ENCODE measurements at regions of chr14 and their contacts with region 1.

Region 1: GRCh38 chr14:20855652-20856291 is 35.4 kb upstream of the RNASE3 start:
- DNase-seq: peak; percentile 29 to 66
- H3K4me3 ChIP-seq: no peak overlapping the region
- H3K27ac ChIP-seq: no peak overlapping the region
- H3K4me1 ChIP-seq: peaks cover 0 to 4% (median 2%) of the 10 kb centered on the region in 4 experiments; a peak in 2 of 7 replicates
- H3K27me3 ChIP-seq: no peaks in the 10 kb centered on the region; a peak in 1 of 7 replicates
- CTCF ChIP-seq: peak; percentile 16 to 71 (median 70)
- EP300 ChIP-seq: no peak
- POLR2A ChIP-seq: no peak
- RAD21 ChIP-seq: peak; percentile 85 to 91

Region 2: GRCh38 chr14:20662968-20663732 is 192.6 kb before region 1 on chr14:
- CTCF ChIA-PET with region 1: interaction called, 11 read pairs
- POLR2A ChIA-PET with region 1: no interaction called
- DNase-seq: peak; percentile 96
- H3K4me3 ChIP-seq: peak overlapping the region; percentile 70 to 89 (median 84)
- H3K27ac ChIP-seq: no peak overlapping the region
- H3K4me1 ChIP-seq: peaks cover 0 to 1% (median under 1%) of the 10 kb centered on the region in 4 experiments; a peak in 4 of 7 replicates
- H3K27me3 ChIP-seq: peaks cover 0 to 3% (median 0%) of the 10 kb centered on the region in 4 experiments; a peak in 1 of 7 replicates
- CTCF ChIP-seq: peak; percentile 57 to 86 (median 83)
- EP300 ChIP-seq: no peak
- POLR2A ChIP-seq: no peak
- RAD21 ChIP-seq: peak; percentile 69 to 72

Region 3: DNA sequence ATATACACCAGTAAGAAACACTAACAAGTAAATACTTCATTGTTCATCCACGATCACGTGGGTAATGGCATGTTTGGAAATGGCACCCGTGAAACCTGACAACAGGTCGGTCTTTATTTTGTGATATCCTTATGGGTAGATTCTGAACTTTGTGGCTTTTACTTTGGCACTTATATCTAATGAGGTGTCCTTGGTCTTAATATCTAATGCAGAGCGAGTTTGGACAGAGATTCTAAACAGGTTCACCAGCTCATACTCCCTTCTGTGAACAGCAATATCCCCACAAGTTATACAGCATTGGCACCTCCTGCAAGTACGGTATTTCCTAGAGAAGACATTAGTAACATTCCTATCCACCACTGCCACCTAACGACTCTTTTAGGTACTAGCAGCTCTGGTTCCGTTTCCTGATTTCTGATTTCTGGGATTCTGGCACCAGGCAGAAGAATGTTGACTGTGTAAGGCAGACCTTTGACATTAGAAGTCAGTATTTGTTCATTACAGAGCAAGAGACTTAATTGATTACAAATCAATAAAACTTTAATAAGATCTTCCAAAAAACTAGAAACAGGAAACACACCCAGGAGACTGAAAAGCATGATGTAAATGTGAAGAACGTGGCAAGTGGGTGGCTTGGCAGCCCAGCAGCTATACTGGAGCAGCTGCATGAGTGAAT is 164.8 kb before region 1 on chr14:
- CTCF ChIA-PET with region 1: interaction called, 52 read pairs
- POLR2A ChIA-PET with region 1: no interaction called
- DNase-seq: peak in 1 of 2 experiments; percentile 61
- H3K4me3 ChIP-seq: no peak overlapping the region
- H3K27ac ChIP-seq: no peak overlapping the region
- H3K4me1 ChIP-seq: no peaks in the 10 kb centered on the region
- H3K27me3 ChIP-seq: no peaks in the 10 kb centered on the region
- CTCF ChIP-seq: peak in 2 of 3 experiments; percentile 78 to 86; a peak in 3 of 4 replicates
- EP300 ChIP-seq: no peak
- POLR2A ChIP-seq: no peak
- RAD21 ChIP-seq: peak; percentile 89 to 92

Region 4: GRCh38 chr14:20707622-20708021 is 148.2 kb before region 1 on chr14:
- CTCF ChIA-PET with region 1: interaction called, 15 read pairs
- POLR2A ChIA-PET with region 1: no interaction called
- DNase-seq: no peak
- H3K4me3 ChIP-seq: peak overlapping the region in 1 of 4 experiments; percentile 42; a peak in 1 of 8 replicates
- H3K27ac ChIP-seq: peak overlapping the region; percentile 41; the same call in 1 of the 2 replicates
- H3K4me1 ChIP-seq: peaks cover 0 to 3% (median 0%) of the 10 kb centered on the region in 4 experiments; a peak in 1 of 7 replicates
- H3K27me3 ChIP-seq: no peaks in the 10 kb centered on the region
- CTCF ChIP-seq: no peak
- EP300 ChIP-seq: no peak
- POLR2A ChIP-seq: no peak
- RAD21 ChIP-seq: no peak

Region 5: DNA sequence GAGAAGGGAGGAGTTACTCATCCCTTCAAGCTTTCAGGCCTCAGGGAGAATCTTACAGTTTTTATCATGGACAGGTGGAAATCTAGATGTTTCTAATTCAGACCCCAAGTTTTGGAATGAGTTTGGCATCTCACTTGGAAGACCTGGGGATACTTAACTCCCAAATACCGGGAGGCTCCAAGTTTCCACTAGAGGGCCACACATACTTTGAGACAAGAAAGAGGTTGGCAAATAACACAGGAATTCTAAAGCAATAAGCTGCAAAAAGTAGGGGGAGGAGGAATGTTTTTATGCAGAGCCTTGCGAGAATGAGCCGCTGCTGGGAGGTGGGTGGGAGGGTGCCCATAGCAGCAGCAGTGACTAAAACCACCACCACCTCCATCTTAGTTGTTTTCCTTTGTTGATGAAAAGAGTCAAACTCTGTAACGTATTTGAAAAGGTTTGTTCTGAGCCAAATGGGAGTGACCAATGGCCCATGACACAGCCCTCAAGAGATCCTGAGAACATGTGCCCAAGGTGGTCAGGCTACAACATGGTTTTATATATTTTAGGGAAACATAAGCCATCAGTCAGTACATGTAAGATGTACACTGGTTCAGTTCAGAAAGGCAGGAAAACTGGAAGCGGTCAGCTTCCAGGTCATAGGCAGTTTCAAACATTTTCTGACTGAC is 19.0 kb before region 1 on chr14:
- CTCF ChIA-PET with region 1: interaction called, 16 read pairs
- POLR2A ChIA-PET with region 1: interaction called, 3 read pairs
- DNase-seq: no peak
- H3K4me3 ChIP-seq: no peak overlapping the region
- H3K27ac ChIP-seq: no peak overlapping the region
- H3K4me1 ChIP-seq: peaks cover 0 to 7% (median 0%) of the 10 kb centered on the region in 4 experiments; a peak in 1 of 7 replicates
- H3K27me3 ChIP-seq: no peaks in the 10 kb centered on the region
- CTCF ChIP-seq: peak in 2 of 3 experiments; percentile 53 to 57; a peak in 3 of 4 replicates
- EP300 ChIP-seq: no peak
- POLR2A ChIP-seq: no peak
- RAD21 ChIP-seq: peak; percentile 47 to 59

Region 6: GRCh38 chr14:20873370-20874177 is 17.8 kb after region 1 on chr14:
- CTCF ChIA-PET with region 1: interaction called, 74 read pairs
- POLR2A ChIA-PET with region 1: interaction called, 4 read pairs
- DNase-seq: peak; percentile 87 to 92
- H3K4me3 ChIP-seq: peak overlapping the region; percentile 27 to 55 (median 38); a peak in 7 of 8 replicates
- H3K27ac ChIP-seq: no peak overlapping the region
- H3K4me1 ChIP-seq: no peaks in the 10 kb centered on the region
- H3K27me3 ChIP-seq: no peaks in the 10 kb centered on the region; a peak in 4 of 7 replicates
- CTCF ChIP-seq: peak; percentile 89 to 92 (median 89)
- EP300 ChIP-seq: no peak
- POLR2A ChIP-seq: peak in 1 of 2 experiments; percentile 64; a peak in 2 of 3 replicates
- RAD21 ChIP-seq: peak; percentile 90 to 91

Region 7: GRCh38 chr14:20934148-20934762 is 78.5 kb after region 1 on chr14:
- CTCF ChIA-PET with region 1: interaction called, 15 read pairs
- POLR2A ChIA-PET with region 1: no interaction called
- DNase-seq: peak; percentile 54 to 96
- H3K4me3 ChIP-seq: peak overlapping the region in 1 of 4 experiments; percentile 31; a peak in 1 of 8 replicates
- H3K27ac ChIP-seq: no peak overlapping the region
- H3K4me1 ChIP-seq: no peaks in the 10 kb centered on the region
- H3K27me3 ChIP-seq: no peaks in the 10 kb centered on the region
- CTCF ChIP-seq: peak; percentile 88 to 95 (median 94)
- EP300 ChIP-seq: no peak
- POLR2A ChIP-seq: no peak
- RAD21 ChIP-seq: peak; percentile 56 to 69

Measured in H1 (cell line).